T-cell (primary cell): ENCODE measurements at regions of chr2 and their contacts with region 1.

Region 1: DNA sequence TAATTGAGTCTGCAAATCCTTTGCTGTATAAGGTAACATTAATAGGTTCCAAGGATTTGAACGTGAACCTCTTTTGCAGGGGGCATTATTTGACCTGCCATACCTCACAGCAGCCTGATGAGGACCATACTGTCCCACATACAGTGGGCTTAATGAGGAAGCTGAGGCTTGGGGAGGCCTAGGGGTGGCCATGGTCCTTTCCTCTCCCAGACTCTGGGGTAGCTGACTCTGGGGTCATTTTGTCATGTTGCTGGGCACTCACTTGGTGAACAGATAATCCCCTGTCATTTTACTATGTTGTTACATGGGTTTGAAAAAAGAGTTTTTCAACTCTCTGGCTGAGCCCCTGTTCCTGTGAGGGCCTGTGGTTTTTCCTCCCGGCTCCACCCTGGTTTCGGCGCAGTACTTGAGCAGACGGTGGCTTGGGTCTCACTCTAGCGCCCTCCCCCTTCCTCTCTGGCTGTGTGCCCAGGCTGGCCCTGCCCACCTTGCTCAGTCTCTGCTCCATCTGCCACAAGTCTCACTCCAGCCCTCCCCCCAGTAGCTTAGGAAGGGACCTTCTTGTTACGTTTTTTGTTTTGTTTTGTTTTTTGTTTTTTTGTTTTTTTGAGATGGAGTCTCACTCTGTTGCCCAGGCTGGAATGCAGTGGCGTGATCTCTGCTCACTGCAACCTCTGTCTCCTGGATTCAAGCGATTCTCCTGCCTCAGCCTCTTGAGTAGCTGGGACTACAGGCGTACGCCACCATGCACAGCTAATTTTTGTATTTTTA is 21.0 kb downstream of the INPP4A start:
- DNase-seq: peak; percentile 73 to 91 (median 85)
- ATAC-seq: peak; percentile 71 to 78 (median 74)
- H3K4me3 ChIP-seq: peak overlapping the region; percentile 36 to 54
- H3K4me3 Mint-ChIP-seq: peak overlapping the region; percentile 78 to 79 (median 78)
- H3K27ac ChIP-seq: peak overlapping the region; percentile 93
- H3K27ac Mint-ChIP-seq: peak overlapping the region; percentile 95 to 98
- H3K4me1 ChIP-seq: peaks cover 67 to 95% of the 10 kb centered on the region in 2 experiments
- H3K4me1 Mint-ChIP-seq: peaks cover 91 to 92% (median 91%) of the 10 kb centered on the region in 3 donors
- H3K27me3 ChIP-seq: no peaks in the 10 kb centered on the region
- H3K27me3 Mint-ChIP-seq: no peaks in the 10 kb centered on the region

Region 2: GRCh38 chr2:98444436-98445176 is 21.0 kb before region 1 on chr2 and contains the start of gene INPP4A:
- CTCF ChIA-PET with region 1: interaction called, 7 to 29 read pairs
- POLR2A ChIA-PET with region 1: interaction called, 6 to 9 read pairs
- DNase-seq: peak; percentile 48 to 89 (median 73)
- ATAC-seq: peak; percentile 71 to 84 (median 82)
- H3K4me3 ChIP-seq: peak within 1 kb of the TSS; percentile 75 to 87
- H3K4me3 Mint-ChIP-seq: peak within 1 kb of the TSS; percentile 93 to 96 (median 96)
- H3K27ac ChIP-seq: peak within 1 kb of the TSS; percentile 77
- H3K27ac Mint-ChIP-seq: peak within 1 kb of the TSS; percentile 92 to 98
- H3K4me1 ChIP-seq: peaks cover 30 to 31% of the 10 kb centered on the region in 2 experiments
- H3K4me1 Mint-ChIP-seq: peaks cover 42 to 48% (median 42%) of the 10 kb centered on the region in 3 donors
- H3K27me3 ChIP-seq: no peaks in the 10 kb centered on the region
- H3K27me3 Mint-ChIP-seq: no peaks in the 10 kb centered on the region
- total RNA-seq, gene INPP4A: 126 to 153 (median 136) TPM

Region 3: DNA sequence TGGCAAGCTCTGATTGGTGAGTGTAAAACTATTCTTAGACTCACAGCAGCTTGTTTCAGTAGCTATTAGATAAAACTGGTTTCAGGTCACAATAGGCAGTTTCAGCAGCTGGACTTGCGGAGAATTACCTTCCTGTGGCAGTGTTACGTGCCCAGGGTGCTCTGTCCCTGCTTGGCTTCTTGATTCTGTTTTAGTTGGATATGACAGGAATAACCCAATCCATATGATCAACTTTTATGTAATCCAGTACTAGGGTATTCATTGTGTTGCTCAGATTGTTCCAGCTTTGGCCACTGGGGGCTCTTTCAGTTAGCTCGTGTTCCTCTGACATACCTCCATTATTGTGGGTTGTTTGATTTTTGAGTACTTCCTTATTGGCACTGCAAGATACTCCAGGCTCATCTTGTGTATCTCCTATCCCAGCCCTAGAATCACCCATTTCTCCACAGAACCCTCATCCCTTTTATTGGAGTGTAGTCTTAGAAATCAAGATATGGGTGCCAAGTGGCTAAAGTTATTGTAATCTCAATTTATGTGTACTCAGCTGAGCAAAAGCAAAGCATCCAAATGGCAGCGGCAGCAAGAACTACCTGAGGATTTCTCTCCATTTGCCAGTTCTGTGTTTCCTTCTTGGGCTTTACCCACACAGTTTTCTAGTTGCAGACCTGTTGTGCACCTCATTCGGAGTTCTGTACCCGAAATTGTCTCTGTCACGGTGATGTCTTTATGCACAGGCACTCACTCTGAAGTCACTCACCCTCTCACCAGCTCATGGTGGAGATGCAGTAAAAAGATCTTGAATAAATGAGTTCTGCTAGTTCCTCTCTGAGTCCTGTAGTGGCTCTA is 22.4 kb after region 1 on chr2:
- CTCF ChIA-PET with region 1: interaction called, 3 to 28 read pairs
- POLR2A ChIA-PET with region 1: interaction called in 1 of 2 experiments, 3 read pairs
- DNase-seq: peak in 30 of 35 experiments; percentile 20 to 76 (median 56)
- ATAC-seq: peak; percentile 71 to 80 (median 75)
- H3K4me3 ChIP-seq: no peak overlapping the region
- H3K4me3 Mint-ChIP-seq: peak overlapping the region in 2 of 3 donors; percentile 9 to 60
- H3K27ac ChIP-seq: peak overlapping the region; percentile 21
- H3K27ac Mint-ChIP-seq: peak overlapping the region; percentile 29 to 67
- H3K4me1 ChIP-seq: peaks cover 49 to 73% of the 10 kb centered on the region in 2 experiments
- H3K4me1 Mint-ChIP-seq: peaks cover 93 to 98% (median 98%) of the 10 kb centered on the region in 3 donors
- H3K27me3 ChIP-seq: no peaks in the 10 kb centered on the region
- H3K27me3 Mint-ChIP-seq: no peaks in the 10 kb centered on the region